ENCODE measurements at regions of chr4 and their contacts with region 1.

Region 1: DNA sequence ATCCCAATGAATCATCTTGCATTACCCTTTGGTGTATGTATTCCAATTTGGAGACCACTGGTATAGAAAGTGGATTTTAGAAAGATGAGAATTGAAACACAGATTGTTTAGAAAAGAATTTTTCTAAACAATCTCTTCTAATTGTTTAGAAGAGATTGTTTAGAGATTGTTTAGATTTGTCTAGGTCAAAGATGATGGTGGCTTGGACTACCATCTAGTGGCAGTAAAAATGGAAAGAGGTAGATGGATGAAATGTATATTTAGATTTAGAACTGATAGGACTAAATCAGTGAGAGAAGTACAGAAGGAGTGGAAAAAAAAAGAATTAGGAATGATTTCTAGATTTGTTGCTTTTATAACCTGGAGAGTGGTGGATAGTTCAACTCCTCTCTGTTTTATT is 70.6 kb downstream of the ARSJ start:
- DNase-seq: peak in 2 of 9 experiments; percentile 29 to 47
- ATAC-seq: no peak
- H3K4me3 ChIP-seq: no peak overlapping the region
- H3K4me3 Mint-ChIP-seq: no peak overlapping the region
- H3K27ac ChIP-seq: no peak overlapping the region
- H3K27ac Mint-ChIP-seq: peak overlapping the region; percentile 2
- H3K4me1 ChIP-seq: peaks cover 26% of the 10 kb centered on the region
- H3K4me1 Mint-ChIP-seq: peaks cover 32% of the 10 kb centered on the region
- H3K27me3 ChIP-seq: no peaks in the 10 kb centered on the region
- H3K27me3 Mint-ChIP-seq: no peaks in the 10 kb centered on the region
- CTCF ChIP-seq: no peak

Region 2: DNA sequence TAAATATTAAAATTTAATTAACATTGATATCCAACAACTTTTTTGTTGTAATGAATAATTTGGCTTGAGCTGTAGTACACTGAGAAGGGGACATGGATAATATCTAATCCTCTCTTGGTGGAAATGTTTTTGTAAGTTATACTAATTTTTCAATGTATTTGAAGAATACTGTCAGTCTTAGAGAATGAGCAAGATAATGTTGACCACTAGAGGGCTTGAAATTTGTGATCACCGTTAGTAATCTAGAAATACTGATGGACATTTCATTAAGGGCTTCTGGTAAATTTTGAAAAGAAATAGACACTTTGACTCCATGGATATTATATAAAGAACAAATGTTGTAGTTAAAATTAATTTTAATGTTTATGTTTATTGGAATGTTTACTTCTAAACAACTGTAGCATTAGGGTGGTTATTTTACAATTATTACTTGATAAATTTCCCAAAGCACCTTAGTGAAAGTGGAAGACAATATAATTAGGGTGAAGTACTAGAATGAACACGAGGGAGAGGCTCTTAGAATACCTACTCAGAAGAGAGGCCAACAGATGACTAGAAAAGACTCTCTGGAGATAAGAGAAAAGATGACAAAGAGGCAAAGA is 127.3 kb before region 1 on chr4:
- CTCF ChIA-PET with region 1: interaction called, 3 read pairs
- POLR2A ChIA-PET with region 1: interaction called, 3 read pairs
- intact Hi-C with region 1: loop called in 1 of 2 experiments (anchors 2 kb)
- DNase-seq: peak in 2 of 9 experiments; percentile 48 to 61
- ATAC-seq: no peak
- H3K4me3 ChIP-seq: no peak overlapping the region
- H3K4me3 Mint-ChIP-seq: no peak overlapping the region
- H3K27ac ChIP-seq: no peak overlapping the region
- H3K27ac Mint-ChIP-seq: no peak overlapping the region
- H3K4me1 ChIP-seq: no peaks in the 10 kb centered on the region
- H3K4me1 Mint-ChIP-seq: peaks cover 4% of the 10 kb centered on the region
- H3K27me3 ChIP-seq: no peaks in the 10 kb centered on the region
- H3K27me3 Mint-ChIP-seq: no peaks in the 10 kb centered on the region
- CTCF ChIP-seq: peak; percentile 72

Region 3: GRCh38 chr4:114780205-114780604 is 871.4 kb after region 1 on chr4:
- CTCF ChIA-PET with region 1: no interaction called
- POLR2A ChIA-PET with region 1: no interaction called
- intact Hi-C with region 1: no loop called
- DNase-seq: no peak
- ATAC-seq: no peak
- H3K4me3 ChIP-seq: no peak overlapping the region
- H3K4me3 Mint-ChIP-seq: no peak overlapping the region
- H3K27ac ChIP-seq: no peak overlapping the region
- H3K27ac Mint-ChIP-seq: no peak overlapping the region
- H3K4me1 ChIP-seq: no peaks in the 10 kb centered on the region
- H3K4me1 Mint-ChIP-seq: no peaks in the 10 kb centered on the region
- H3K27me3 ChIP-seq: no peaks in the 10 kb centered on the region
- H3K27me3 Mint-ChIP-seq: peaks cover 8% of the 10 kb centered on the region
- CTCF ChIP-seq: no peak